ENCODE measurements at regions of chr20 and their contacts with region 1.

Region 1: GRCh38 chr20:33686100-33686983 is at the start of gene E2F1:
- DNase-seq: peak; percentile 93
- H3K4me3 ChIP-seq: peak within 1 kb of the TSS; percentile 46 to 71 (median 47)
- H3K27ac ChIP-seq: no peak within 1 kb of the TSS
- H3K4me1 ChIP-seq: peaks cover 9% of the 10 kb centered on the region
- H3K27me3 ChIP-seq: no peaks in the 10 kb centered on the region
- CTCF ChIP-seq: peak in 1 of 2 donors; percentile 27
- total RNA-seq, gene E2F1: 1.8 to 12.7 TPM

Region 2: DNA sequence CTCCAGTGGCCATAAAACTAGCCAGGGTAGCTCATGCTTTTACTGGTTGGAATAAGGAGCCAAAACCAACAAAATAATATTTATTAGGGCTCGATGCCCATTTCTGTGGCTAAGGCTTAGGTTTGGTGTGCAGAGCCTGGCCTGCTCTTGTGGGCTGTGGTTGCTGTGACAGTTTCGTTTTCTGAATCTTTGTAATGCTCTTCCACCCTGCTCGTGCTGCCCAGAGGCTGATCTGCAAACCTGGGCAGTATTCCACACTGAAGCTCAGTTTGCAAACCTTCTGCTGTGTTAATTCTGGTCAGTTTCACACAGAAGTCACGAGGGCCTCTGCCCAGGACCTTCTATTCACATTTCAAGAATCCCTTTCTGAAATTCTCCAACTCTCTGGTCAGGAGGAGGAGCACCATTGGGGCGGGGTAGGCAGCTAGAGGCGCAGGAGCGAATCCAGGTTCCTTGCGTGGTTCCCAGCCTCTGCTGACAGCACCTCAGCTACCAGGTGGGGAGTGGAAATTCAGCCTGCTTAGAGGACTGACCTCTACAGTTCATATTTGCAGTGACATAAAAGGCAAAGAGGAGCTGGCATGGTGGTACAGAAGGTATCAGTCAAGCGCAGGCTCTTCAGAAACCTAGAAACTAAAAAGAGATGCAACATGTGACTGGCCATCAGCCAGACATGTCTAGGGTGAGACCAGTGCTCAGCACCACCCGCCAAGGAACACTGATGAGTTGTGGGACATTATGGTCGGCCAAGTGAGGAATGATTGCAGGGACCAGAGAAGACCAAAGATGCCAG is 38.5 kb before region 1 on chr20:
- CTCF ChIA-PET with region 1: no interaction called
- dilution Hi-C with region 1: no loop called
- in situ Hi-C with region 1: no loop called
- intact Hi-C with region 1: no loop called
- DNase-seq: peak; percentile 66
- H3K4me3 ChIP-seq: no peak overlapping the region
- H3K27ac ChIP-seq: no peak overlapping the region
- H3K4me1 ChIP-seq: peaks cover 11% of the 10 kb centered on the region
- H3K27me3 ChIP-seq: no peaks in the 10 kb centered on the region
- CTCF ChIP-seq: no peak

Region 3: DNA sequence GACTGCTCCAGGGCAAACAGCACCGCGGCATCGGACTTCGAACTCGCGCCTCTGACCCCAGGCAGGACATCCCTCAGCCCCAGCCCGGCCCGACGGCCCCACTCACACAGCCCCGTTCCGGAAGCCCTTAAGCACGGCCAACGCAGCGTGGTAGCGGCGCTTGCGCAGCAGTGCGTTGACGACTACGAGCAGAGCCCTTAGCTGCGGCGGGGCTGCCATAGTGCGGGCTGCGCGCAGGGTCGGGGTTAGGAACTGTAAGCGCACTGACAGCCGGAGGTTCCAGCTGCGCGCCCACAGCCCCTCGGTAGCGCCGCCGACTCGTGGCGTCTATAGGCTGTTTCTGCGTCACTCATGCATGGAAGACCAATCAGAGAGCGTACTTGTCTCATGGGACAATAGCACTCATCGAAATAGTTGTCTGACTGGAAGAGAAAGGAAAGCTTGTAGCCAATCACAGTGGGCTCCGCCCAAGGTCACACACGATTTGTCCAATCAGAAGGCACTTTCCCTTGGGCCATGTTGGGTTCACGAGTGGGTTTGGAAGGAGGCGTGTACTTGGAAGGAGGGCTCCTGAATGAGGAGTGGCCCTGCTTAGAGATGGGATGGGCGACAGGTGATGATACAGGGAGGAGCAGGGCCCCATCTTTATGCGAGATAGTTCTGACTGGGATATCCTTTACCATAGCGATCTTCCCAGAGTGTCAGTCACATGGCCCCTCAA is 33.8 kb after region 1 on chr20 and contains the start of gene PXMP4:
- CTCF ChIA-PET with region 1: no interaction called
- dilution Hi-C with region 1: loop called (anchors 5 kb)
- in situ Hi-C with region 1: no loop called
- intact Hi-C with region 1: no loop called
- DNase-seq: peak; percentile 97
- H3K4me3 ChIP-seq: peak within 1 kb of the TSS; percentile 70 to 88 (median 80)
- H3K27ac ChIP-seq: peak within 1 kb of the TSS; percentile 5
- H3K4me1 ChIP-seq: no peaks in the 10 kb centered on the region
- H3K27me3 ChIP-seq: no peaks in the 10 kb centered on the region
- CTCF ChIP-seq: no peak
- total RNA-seq, gene PXMP4: 8.0 to 11.3 TPM

Region 4: GRCh38 chr20:33744773-33745385 is 58.5 kb after region 1 on chr20:
- CTCF ChIA-PET with region 1: no interaction called
- dilution Hi-C with region 1: loop called (anchors 5 kb)
- in situ Hi-C with region 1: no loop called
- intact Hi-C with region 1: no loop called
- DNase-seq: peak; percentile 57
- H3K4me3 ChIP-seq: no peak overlapping the region
- H3K27ac ChIP-seq: no peak overlapping the region
- H3K4me1 ChIP-seq: peaks cover 5% of the 10 kb centered on the region
- H3K27me3 ChIP-seq: no peaks in the 10 kb centered on the region
- CTCF ChIP-seq: no peak

Region 5: GRCh38 chr20:33789109-33789854 is 102.9 kb after region 1 on chr20:
- CTCF ChIA-PET with region 1: no interaction called
- dilution Hi-C with region 1: loop called (anchors 5 kb)
- in situ Hi-C with region 1: no loop called
- intact Hi-C with region 1: no loop called
- DNase-seq: peak; percentile 98
- H3K4me3 ChIP-seq: no peak overlapping the region
- H3K27ac ChIP-seq: no peak overlapping the region
- H3K4me1 ChIP-seq: peaks cover 27% of the 10 kb centered on the region
- H3K27me3 ChIP-seq: no peaks in the 10 kb centered on the region
- CTCF ChIP-seq: no peak